PC-3 (cell line): ENCODE measurements at regions of chr5 and their contacts with region 1.

Region 1: DNA sequence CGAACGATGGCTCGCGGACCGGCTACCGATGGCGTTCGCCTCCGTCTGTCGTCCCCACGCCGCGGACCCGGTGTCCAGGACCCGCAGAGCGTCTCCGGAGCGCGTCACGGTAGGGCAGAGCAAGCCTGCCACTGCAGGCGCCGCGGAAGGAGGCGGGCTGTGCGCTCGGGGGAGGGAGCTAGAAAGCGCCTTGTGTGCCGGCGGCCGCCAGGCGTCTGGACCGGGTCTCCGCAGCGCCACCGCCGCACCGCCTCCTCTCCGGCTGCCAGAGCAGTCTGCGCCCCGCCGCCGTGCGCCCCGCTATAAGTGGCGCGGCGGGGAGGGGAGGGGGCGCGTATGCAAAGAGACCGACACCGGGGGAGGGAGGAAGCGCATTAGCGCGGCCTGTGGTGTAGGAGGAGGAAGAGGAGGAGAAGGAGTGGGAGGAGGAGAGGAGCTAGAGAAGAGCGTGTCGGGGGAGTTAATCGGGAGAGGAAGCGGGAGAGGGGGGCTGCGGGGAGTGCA is at the start of gene ENC1:
- DNase-seq: peak; percentile 87
- ATAC-seq: peak; percentile 53
- H3K4me3 ChIP-seq: peak within 1 kb of the TSS; percentile 91
- H3K27ac ChIP-seq: peak within 1 kb of the TSS; percentile 69
- H3K4me1 ChIP-seq: peaks cover 57% of the 10 kb centered on the region
- H3K27me3 ChIP-seq: no peaks in the 10 kb centered on the region
- CTCF ChIP-seq: peak; percentile 46
- total RNA-seq, gene ENC1: 24.5 TPM in 2 replicates

Region 2: DNA sequence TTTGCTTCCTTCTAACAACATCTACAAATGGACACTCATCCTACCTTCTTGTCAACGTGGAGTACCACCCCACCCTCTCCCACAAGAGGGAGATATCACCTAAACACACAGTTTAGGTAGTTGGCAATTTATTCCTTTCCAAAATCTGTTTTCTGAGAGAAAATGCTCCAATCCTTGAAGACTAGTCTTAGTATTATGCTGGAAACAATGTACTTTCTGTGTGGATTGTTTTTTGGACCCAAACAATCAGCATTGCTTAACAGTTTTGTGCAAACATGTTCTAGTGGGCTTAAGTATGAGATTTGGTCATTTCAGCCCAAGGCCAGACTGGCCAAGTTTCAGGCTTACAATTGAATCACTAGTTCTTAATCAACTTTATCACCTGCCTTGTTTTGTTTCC is 655.4 kb before region 1 on chr5:
- CTCF ChIA-PET with region 1: interaction called, 6 read pairs
- POLR2A ChIA-PET with region 1: no interaction called
- intact Hi-C with region 1: loop called (anchors 1 kb)
- DNase-seq: peak; percentile 62
- ATAC-seq: peak; percentile 70
- H3K4me3 ChIP-seq: no peak overlapping the region
- H3K27ac ChIP-seq: no peak overlapping the region
- H3K4me1 ChIP-seq: no peaks in the 10 kb centered on the region
- H3K27me3 ChIP-seq: no peaks in the 10 kb centered on the region
- CTCF ChIP-seq: peak; percentile 81

Region 3: DNA sequence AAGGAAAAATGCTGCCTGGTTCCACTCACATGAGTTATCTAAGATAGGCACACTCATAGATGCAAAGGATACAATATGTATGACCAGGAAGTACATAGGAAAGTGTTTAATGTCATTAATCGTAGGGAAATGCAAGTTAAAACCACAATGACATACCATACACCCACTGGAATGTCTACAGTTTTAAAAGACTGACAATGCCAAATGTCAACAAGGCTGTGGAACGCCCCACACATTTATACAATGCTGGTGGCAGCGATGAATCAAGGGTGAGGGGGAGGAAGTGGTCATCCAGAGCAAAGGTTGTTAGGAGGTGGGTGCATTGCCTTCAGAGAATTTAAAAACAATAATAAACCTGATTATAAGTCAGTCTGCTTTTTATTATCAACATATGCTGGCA is 576.7 kb before region 1 on chr5:
- CTCF ChIA-PET with region 1: no interaction called
- POLR2A ChIA-PET with region 1: no interaction called
- intact Hi-C with region 1: loop called (anchors 2 kb)
- DNase-seq: peak; percentile 90
- ATAC-seq: peak; percentile 95
- H3K4me3 ChIP-seq: no peak overlapping the region
- H3K27ac ChIP-seq: peak overlapping the region; percentile 55
- H3K4me1 ChIP-seq: peaks cover 45% of the 10 kb centered on the region
- H3K27me3 ChIP-seq: no peaks in the 10 kb centered on the region
- CTCF ChIP-seq: no peak

Region 4: DNA sequence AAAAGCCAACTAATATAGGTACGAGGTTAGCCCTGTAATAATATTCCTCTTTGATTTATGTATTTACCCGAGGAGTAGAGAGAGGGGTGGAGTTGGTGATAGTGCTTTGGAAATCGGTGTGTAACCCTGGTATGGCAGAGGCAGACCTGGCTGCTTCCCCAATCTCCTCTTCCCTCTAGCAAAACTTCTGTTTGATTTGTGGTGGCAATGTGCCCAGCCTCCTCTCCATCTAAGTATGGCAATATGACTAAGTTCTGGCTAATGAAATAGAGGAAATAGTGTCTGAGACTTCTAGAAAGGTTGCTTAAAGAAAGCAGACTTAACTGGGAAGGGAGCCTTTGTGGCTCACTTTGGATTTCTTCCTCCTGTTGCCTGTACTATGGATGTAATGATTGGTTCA is 491.1 kb before region 1 on chr5:
- CTCF ChIA-PET with region 1: no interaction called
- POLR2A ChIA-PET with region 1: no interaction called
- intact Hi-C with region 1: no loop called
- DNase-seq: peak; percentile 80
- ATAC-seq: peak; percentile 96
- H3K4me3 ChIP-seq: no peak overlapping the region
- H3K27ac ChIP-seq: peak overlapping the region; percentile 77
- H3K4me1 ChIP-seq: peaks cover 13% of the 10 kb centered on the region
- H3K27me3 ChIP-seq: no peaks in the 10 kb centered on the region
- CTCF ChIP-seq: no peak

Region 5: DNA sequence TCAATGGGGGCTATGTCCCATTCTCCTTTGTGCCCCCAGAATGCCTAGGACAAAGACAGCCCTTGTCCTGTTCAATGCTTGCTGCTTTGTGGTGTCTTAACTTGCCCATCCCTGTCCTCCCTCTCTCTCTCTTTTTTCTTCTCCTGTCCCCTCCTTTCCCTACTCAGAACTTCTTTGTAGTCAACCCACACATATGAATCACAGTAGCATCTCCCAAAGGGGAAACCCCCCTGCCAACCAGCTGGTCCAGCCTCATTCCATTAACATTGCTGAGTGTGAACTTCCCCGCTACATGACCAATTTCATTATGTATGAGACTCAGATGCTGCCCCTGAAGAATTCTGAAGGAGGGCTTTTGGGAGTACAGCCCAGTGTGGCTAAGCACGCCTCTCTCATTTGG is 408.2 kb before region 1 on chr5:
- CTCF ChIA-PET with region 1: no interaction called
- POLR2A ChIA-PET with region 1: no interaction called
- intact Hi-C with region 1: loop called (anchors 5 kb)
- DNase-seq: peak; percentile 77
- ATAC-seq: no peak; the same call in 1 of the 2 replicates
- H3K4me3 ChIP-seq: no peak overlapping the region
- H3K27ac ChIP-seq: peak overlapping the region; percentile 79
- H3K4me1 ChIP-seq: peaks cover 50% of the 10 kb centered on the region
- H3K27me3 ChIP-seq: no peaks in the 10 kb centered on the region
- CTCF ChIP-seq: no peak

Region 6: DNA sequence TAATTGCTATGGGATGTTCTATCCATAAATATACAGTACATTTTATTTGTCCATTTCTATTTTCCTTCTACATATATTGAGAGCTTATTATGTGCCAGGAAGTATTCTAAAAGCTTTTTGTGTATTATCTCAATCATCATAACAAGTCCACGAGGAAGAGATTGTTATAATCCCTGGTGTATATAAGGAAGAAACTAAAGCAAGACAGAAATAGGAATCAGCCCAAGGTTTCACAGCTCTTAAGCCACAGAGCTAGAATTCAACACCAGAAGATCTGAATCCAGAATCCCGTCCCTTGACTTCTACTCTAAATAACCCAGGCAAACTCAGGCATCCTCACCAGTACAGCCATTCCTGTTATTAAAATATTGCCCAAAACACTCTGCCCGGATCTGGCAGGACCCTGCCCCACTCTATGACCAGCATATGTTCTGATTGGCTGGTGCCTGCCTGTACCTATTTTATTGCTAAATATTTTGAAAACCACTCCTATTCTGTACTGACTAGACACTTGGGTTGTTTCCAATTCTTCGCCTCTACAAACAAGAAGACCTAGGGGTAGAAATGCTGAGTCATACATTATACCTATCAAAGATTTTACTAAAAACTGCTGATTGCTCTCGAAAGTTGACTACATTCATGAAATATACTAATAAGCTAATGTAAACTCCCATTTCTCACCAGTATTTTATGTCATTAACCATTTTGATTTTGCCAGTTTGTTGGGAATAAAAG is 297.4 kb before region 1 on chr5:
- CTCF ChIA-PET with region 1: no interaction called
- POLR2A ChIA-PET with region 1: no interaction called
- intact Hi-C with region 1: loop called (anchors 5 kb)
- DNase-seq: peak; percentile 86
- ATAC-seq: peak; percentile 76
- H3K4me3 ChIP-seq: no peak overlapping the region
- H3K27ac ChIP-seq: peak overlapping the region; percentile 3; the same call in 1 of the 2 replicates
- H3K4me1 ChIP-seq: peaks cover 24% of the 10 kb centered on the region
- H3K27me3 ChIP-seq: no peaks in the 10 kb centered on the region
- CTCF ChIP-seq: no peak

Region 7: GRCh38 chr5:74408150-74409043 is 232.1 kb before region 1 on chr5:
- CTCF ChIA-PET with region 1: interaction called, 5 read pairs
- POLR2A ChIA-PET with region 1: no interaction called
- intact Hi-C with region 1: loop called (anchors 1 kb)
- DNase-seq: peak; percentile 88
- ATAC-seq: peak; percentile 98
- H3K4me3 ChIP-seq: peak overlapping the region; percentile 36; the same call in 1 of the 2 replicates
- H3K27ac ChIP-seq: peak overlapping the region; percentile 58
- H3K4me1 ChIP-seq: peaks cover 18% of the 10 kb centered on the region
- H3K27me3 ChIP-seq: no peaks in the 10 kb centered on the region
- CTCF ChIP-seq: no peak

Region 8: DNA sequence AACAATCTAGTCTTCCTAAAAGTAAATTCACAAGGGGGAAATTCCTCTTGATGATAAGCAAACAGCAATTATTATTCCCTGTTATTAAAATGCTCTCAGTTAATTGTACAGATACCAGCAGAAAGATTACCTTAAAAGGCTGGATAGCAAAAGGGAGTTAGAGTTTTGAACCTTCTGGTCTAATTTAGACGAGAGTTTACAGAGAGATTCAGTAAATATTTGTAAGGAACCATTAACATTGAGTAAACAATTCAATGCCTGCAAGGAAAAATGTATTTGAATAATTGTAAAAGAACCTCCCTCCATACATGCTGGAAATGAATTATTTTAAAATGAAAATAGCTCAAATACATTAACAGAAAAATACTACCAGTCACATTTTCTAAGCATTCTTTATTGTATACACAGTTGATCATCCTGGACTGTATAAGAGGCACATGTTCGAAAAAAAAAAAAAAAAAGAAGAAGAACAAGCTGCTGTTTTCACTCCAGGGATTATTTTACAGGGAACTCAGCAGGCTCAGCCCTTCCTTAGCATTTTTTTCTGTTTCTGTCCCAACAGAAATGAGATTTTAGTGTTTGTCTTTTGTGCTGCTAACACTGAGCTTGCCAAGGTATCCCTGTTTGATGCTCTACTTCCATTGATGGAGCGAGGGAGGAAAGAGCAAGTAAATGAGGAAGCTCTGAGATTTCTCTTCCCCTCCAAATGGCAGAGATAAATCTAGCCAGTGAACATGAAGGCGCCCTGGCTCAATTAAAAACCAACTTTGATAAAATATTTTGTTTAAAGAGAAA is 141.0 kb before region 1 on chr5:
- CTCF ChIA-PET with region 1: no interaction called
- POLR2A ChIA-PET with region 1: no interaction called
- intact Hi-C with region 1: loop called (anchors 2 kb)
- DNase-seq: no peak
- ATAC-seq: peak; percentile 55
- H3K4me3 ChIP-seq: no peak overlapping the region
- H3K27ac ChIP-seq: no peak overlapping the region
- H3K4me1 ChIP-seq: 0 out of 2 replicates have a peak, but pooled peaks cover 13% of the 10 kb centered on the region
- H3K27me3 ChIP-seq: no peaks in the 10 kb centered on the region
- CTCF ChIP-seq: no peak